ENCODE measurements at regions of chr5 and their contacts with region 1.

Region 1: GRCh38 chr5:56909294-56910209 is at the start of gene SETD9:
- DNase-seq: peak; percentile 75 to 93 (median 80)
- ATAC-seq: peak; percentile 81 to 86
- H3K4me3 Mint-ChIP-seq: peak within 1 kb of the TSS; percentile 87 to 100 (median 94)
- H3K27ac Mint-ChIP-seq: peak within 1 kb of the TSS; percentile 86 to 96 (median 94)
- H3K4me1 Mint-ChIP-seq: peaks cover 11 to 22% (median 20%) of the 10 kb centered on the region in 4 donors
- H3K27me3 Mint-ChIP-seq: no peaks in the 10 kb centered on the region
- polyA plus RNA-seq, gene SETD9: 9.4 to 12.8 (median 9.8) TPM

Region 2: DNA sequence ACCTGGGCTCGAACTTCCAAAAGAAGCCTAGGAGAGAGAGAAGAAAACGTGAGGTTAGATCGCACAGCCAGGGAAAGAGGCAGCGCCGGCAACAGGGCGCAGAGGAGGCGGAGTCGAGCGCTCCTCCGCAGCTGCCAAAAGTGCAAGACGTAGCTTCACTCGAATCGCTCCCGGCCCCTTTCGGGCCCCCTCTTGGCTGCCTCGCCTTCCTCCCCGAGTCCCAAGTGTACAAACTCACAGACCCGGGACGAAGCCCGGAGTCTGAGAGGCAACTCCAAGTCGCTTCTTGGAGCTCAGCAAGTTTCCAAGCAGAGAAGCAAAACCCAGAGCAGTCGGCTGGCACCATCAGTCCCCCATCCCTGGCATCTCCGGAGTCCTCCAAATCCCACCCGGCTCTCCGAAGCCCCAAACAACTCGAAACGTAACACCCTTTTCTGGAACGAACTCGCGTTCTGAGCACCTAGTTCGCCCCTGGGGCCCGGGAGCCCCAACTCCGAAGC is 41.1 kb after region 1 on chr5:
- POLR2A ChIA-PET with region 1: interaction called, 15 read pairs
- DNase-seq: peak; percentile 20 to 68 (median 41)
- ATAC-seq: peak; percentile 53 to 55
- H3K4me3 Mint-ChIP-seq: peak overlapping the region; percentile 91 to 97 (median 95)
- H3K27ac Mint-ChIP-seq: peak overlapping the region; percentile 78 to 94 (median 92)
- H3K4me1 Mint-ChIP-seq: peaks cover 11 to 36% (median 23%) of the 10 kb centered on the region in 4 donors
- H3K27me3 Mint-ChIP-seq: peaks cover 0 to 17% (median 7%) of the 10 kb centered on the region in 5 donors

Region 3: GRCh38 chr5:57173185-57174127 is 263.9 kb after region 1 on chr5 and contains the start of gene GPBP1:
- POLR2A ChIA-PET with region 1: interaction called, 20 read pairs
- DNase-seq: peak; percentile 97 to 99 (median 98)
- ATAC-seq: peak; percentile 71 to 81
- H3K4me3 Mint-ChIP-seq: peak within 1 kb of the TSS; percentile 95 to 99 (median 97)
- H3K27ac Mint-ChIP-seq: peak within 1 kb of the TSS; percentile 95 to 100 (median 99)
- H3K4me1 Mint-ChIP-seq: peaks cover 21 to 44% (median 26%) of the 10 kb centered on the region in 4 donors
- H3K27me3 Mint-ChIP-seq: no peaks in the 10 kb centered on the region
- polyA plus RNA-seq, gene GPBP1: 69.8 to 97.1 (median 93.0) TPM